ENCODE measurements at regions of chr3 and their contacts with region 1.

Region 1: GRCh38 chr3:25648107-25648535 is 16.6 kb downstream of the TOP2B start:
- DNase-seq: peak; percentile 88
- ATAC-seq: peak; percentile 94
- H3K4me3 Mint-ChIP-seq: no peak overlapping the region
- H3K27ac Mint-ChIP-seq: no peak overlapping the region
- H3K4me1 Mint-ChIP-seq: peaks cover 27% of the 10 kb centered on the region
- H3K27me3 Mint-ChIP-seq: no peaks in the 10 kb centered on the region

Region 2: GRCh38 chr3:25582242-25582641 is 65.9 kb before region 1 on chr3:
- CTCF ChIA-PET with region 1: no interaction called
- DNase-seq: no peak
- ATAC-seq: no peak
- H3K4me3 Mint-ChIP-seq: no peak overlapping the region
- H3K27ac Mint-ChIP-seq: no peak overlapping the region
- H3K4me1 Mint-ChIP-seq: no peaks in the 10 kb centered on the region
- H3K27me3 Mint-ChIP-seq: peaks cover 3% of the 10 kb centered on the region

Region 3: DNA sequence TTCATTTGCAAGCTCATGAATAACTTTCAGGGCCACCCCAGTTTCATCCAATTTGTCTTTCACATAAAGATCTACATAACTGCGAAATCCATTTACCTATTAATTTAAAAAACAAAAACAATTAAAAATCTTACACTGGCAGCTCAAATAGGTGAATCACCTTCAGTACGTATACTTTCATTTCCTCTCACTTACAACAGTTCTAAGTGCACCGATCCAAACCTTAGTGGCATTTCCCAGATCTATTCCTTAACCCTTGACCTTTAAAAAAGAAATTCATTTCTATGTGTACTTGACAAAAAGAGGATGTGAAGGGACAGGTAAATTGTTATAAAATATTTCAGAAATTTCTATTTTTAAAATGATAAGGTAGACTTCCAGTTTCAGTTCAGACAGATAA is 14.2 kb before region 1 on chr3:
- CTCF ChIA-PET with region 1: interaction called, 11 read pairs
- DNase-seq: no peak
- ATAC-seq: no peak
- H3K4me3 Mint-ChIP-seq: no peak overlapping the region
- H3K27ac Mint-ChIP-seq: no peak overlapping the region
- H3K4me1 Mint-ChIP-seq: peaks cover 10% of the 10 kb centered on the region
- H3K27me3 Mint-ChIP-seq: no peaks in the 10 kb centered on the region

Region 4: GRCh38 chr3:25658836-25659235 is 10.7 kb after region 1 on chr3:
- CTCF ChIA-PET with region 1: interaction called, 23 read pairs
- DNase-seq: no peak
- ATAC-seq: no peak
- H3K4me3 Mint-ChIP-seq: no peak overlapping the region
- H3K27ac Mint-ChIP-seq: no peak overlapping the region
- H3K4me1 Mint-ChIP-seq: peaks cover 46% of the 10 kb centered on the region
- H3K27me3 Mint-ChIP-seq: no peaks in the 10 kb centered on the region

Region 5: GRCh38 chr3:25663869-25664809 is 16.0 kb after region 1 on chr3:
- CTCF ChIA-PET with region 1: interaction called, 23 read pairs
- DNase-seq: peak; percentile 72
- ATAC-seq: peak; percentile 42
- H3K4me3 Mint-ChIP-seq: peak overlapping the region; percentile 89
- H3K27ac Mint-ChIP-seq: peak overlapping the region; percentile 99
- H3K4me1 Mint-ChIP-seq: peaks cover 34% of the 10 kb centered on the region
- H3K27me3 Mint-ChIP-seq: no peaks in the 10 kb centered on the region

Region 6: GRCh38 chr3:25782938-25783660 is 135.0 kb after region 1 on chr3 and contains the start of gene NGLY1:
- CTCF ChIA-PET with region 1: interaction called, 11 read pairs
- DNase-seq: peak; percentile 88
- ATAC-seq: peak; percentile 93
- H3K4me3 Mint-ChIP-seq: peak within 1 kb of the TSS; percentile 94
- H3K27ac Mint-ChIP-seq: peak within 1 kb of the TSS; percentile 84
- H3K4me1 Mint-ChIP-seq: peaks cover 42% of the 10 kb centered on the region
- H3K27me3 Mint-ChIP-seq: no peaks in the 10 kb centered on the region
- total RNA-seq, gene NGLY1: 41.2 to 70.0 TPM

Region 7: DNA sequence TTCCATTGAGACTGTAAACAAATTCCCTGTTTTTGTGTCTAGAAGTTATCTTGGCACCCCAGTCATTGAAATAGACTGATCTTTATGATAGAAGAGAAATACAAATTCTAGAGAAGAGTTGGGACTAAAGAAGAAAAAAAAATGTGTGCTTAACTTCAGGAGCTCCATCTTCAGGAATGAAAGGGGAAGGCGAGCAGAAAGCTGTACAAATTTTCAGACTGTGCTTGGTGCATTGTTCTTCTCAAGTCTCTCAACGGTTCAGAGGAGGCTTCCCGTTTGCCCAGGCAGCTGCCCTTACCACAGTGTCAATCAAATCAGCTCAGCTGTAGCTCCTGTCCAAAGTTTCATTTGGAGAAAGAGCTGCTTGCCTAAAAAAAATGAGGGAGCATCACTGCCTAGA is 183.5 kb after region 1 on chr3:
- CTCF ChIA-PET with region 1: interaction called, 13 read pairs
- DNase-seq: no peak
- ATAC-seq: no peak
- H3K4me3 Mint-ChIP-seq: no peak overlapping the region
- H3K27ac Mint-ChIP-seq: no peak overlapping the region
- H3K4me1 Mint-ChIP-seq: peaks cover under 1% of the 10 kb centered on the region
- H3K27me3 Mint-ChIP-seq: peaks cover 2% of the 10 kb centered on the region

Region 8: GRCh38 chr3:25856902-25857518 is 208.9 kb after region 1 on chr3:
- CTCF ChIA-PET with region 1: interaction called, 96 read pairs
- DNase-seq: no peak
- ATAC-seq: peak; percentile 76
- H3K4me3 Mint-ChIP-seq: no peak overlapping the region
- H3K27ac Mint-ChIP-seq: no peak overlapping the region
- H3K4me1 Mint-ChIP-seq: peaks cover 8% of the 10 kb centered on the region
- H3K27me3 Mint-ChIP-seq: peaks cover 9% of the 10 kb centered on the region

Measured in activated CD8-positive, alpha-beta memory T cell treated with anti-CD3 and anti-CD28 coated beads, Interleukin-2, amount 10 ng/mL, durations not matched to agents 7 days and 5 days (primary cell).